CD8-positive, alpha-beta T cell (primary cell): ENCODE measurements at regions of chr18 and their contacts with region 1.

Region 1: GRCh38 chr18:2547477-2548087 is 23.7 kb downstream of the METTL4 start:
- DNase-seq: peak in 2 of 9 experiments; percentile 54 to 66
- ATAC-seq: peak; percentile 52
- H3K4me3 ChIP-seq: no peak overlapping the region
- H3K4me3 Mint-ChIP-seq: no peak overlapping the region
- H3K27ac ChIP-seq: no peak overlapping the region
- H3K27ac Mint-ChIP-seq: no peak overlapping the region
- H3K4me1 ChIP-seq: no peaks in the 10 kb centered on the region
- H3K4me1 Mint-ChIP-seq: peaks cover 11% of the 10 kb centered on the region
- H3K27me3 ChIP-seq: no peaks in the 10 kb centered on the region
- H3K27me3 Mint-ChIP-seq: no peaks in the 10 kb centered on the region
- CTCF ChIP-seq: peak; percentile 79

Region 2: GRCh38 chr18:741931-742512 is 1805.6 kb before region 1 on chr18:
- CTCF ChIA-PET with region 1: no interaction called
- POLR2A ChIA-PET with region 1: no interaction called
- intact Hi-C with region 1: loop called in 1 of 2 experiments (anchors 5 kb)
- DNase-seq: peak in 2 of 9 experiments; percentile 59 to 72
- ATAC-seq: peak; percentile 76
- H3K4me3 ChIP-seq: no peak overlapping the region
- H3K4me3 Mint-ChIP-seq: no peak overlapping the region
- H3K27ac ChIP-seq: no peak overlapping the region
- H3K27ac Mint-ChIP-seq: no peak overlapping the region
- H3K4me1 ChIP-seq: no peaks in the 10 kb centered on the region
- H3K4me1 Mint-ChIP-seq: peaks cover 2% of the 10 kb centered on the region
- H3K27me3 ChIP-seq: no peaks in the 10 kb centered on the region
- H3K27me3 Mint-ChIP-seq: no peaks in the 10 kb centered on the region
- CTCF ChIP-seq: peak; percentile 89

Region 3: GRCh38 chr18:961644-962355 is 1585.8 kb before region 1 on chr18:
- CTCF ChIA-PET with region 1: no interaction called
- POLR2A ChIA-PET with region 1: no interaction called
- intact Hi-C with region 1: loop called in 1 of 2 experiments (anchors 10 kb)
- DNase-seq: peak in 8 of 9 experiments; percentile 9 to 58 (median 46)
- ATAC-seq: no peak
- H3K4me3 ChIP-seq: no peak overlapping the region
- H3K4me3 Mint-ChIP-seq: peak overlapping the region; percentile 58
- H3K27ac ChIP-seq: no peak overlapping the region
- H3K27ac Mint-ChIP-seq: no peak overlapping the region
- H3K4me1 ChIP-seq: no peaks in the 10 kb centered on the region
- H3K4me1 Mint-ChIP-seq: peaks cover 4% of the 10 kb centered on the region
- H3K27me3 ChIP-seq: peaks cover 0 to 4% of the 10 kb centered on the region in 2 experiments
- H3K27me3 Mint-ChIP-seq: peaks cover 9% of the 10 kb centered on the region
- CTCF ChIP-seq: peak; percentile 94

Region 4: GRCh38 chr18:1585879-1586488 is 961.6 kb before region 1 on chr18:
- CTCF ChIA-PET with region 1: no interaction called
- POLR2A ChIA-PET with region 1: no interaction called
- intact Hi-C with region 1: loop called in 1 of 2 experiments (anchors 2 kb)
- DNase-seq: peak in 2 of 9 experiments; percentile 5 to 12
- ATAC-seq: no peak
- H3K4me3 ChIP-seq: no peak overlapping the region
- H3K4me3 Mint-ChIP-seq: no peak overlapping the region
- H3K27ac ChIP-seq: no peak overlapping the region
- H3K27ac Mint-ChIP-seq: no peak overlapping the region
- H3K4me1 ChIP-seq: no peaks in the 10 kb centered on the region
- H3K4me1 Mint-ChIP-seq: peaks cover 4% of the 10 kb centered on the region
- H3K27me3 ChIP-seq: no peaks in the 10 kb centered on the region
- H3K27me3 Mint-ChIP-seq: peaks cover 2% of the 10 kb centered on the region
- CTCF ChIP-seq: peak; percentile 45

Region 5: GRCh38 chr18:2104620-2105462 is 442.7 kb before region 1 on chr18:
- CTCF ChIA-PET with region 1: interaction called, 13 read pairs
- POLR2A ChIA-PET with region 1: no interaction called
- intact Hi-C with region 1: loop called (anchors 2 kb)
- DNase-seq: peak in 8 of 9 experiments; percentile 6 to 55 (median 32)
- ATAC-seq: no peak
- H3K4me3 ChIP-seq: no peak overlapping the region
- H3K4me3 Mint-ChIP-seq: no peak overlapping the region
- H3K27ac ChIP-seq: no peak overlapping the region
- H3K27ac Mint-ChIP-seq: no peak overlapping the region
- H3K4me1 ChIP-seq: no peaks in the 10 kb centered on the region
- H3K4me1 Mint-ChIP-seq: no peaks in the 10 kb centered on the region
- H3K27me3 ChIP-seq: no peaks in the 10 kb centered on the region
- H3K27me3 Mint-ChIP-seq: peaks cover 6% of the 10 kb centered on the region
- CTCF ChIP-seq: peak; percentile 40

Region 6: DNA sequence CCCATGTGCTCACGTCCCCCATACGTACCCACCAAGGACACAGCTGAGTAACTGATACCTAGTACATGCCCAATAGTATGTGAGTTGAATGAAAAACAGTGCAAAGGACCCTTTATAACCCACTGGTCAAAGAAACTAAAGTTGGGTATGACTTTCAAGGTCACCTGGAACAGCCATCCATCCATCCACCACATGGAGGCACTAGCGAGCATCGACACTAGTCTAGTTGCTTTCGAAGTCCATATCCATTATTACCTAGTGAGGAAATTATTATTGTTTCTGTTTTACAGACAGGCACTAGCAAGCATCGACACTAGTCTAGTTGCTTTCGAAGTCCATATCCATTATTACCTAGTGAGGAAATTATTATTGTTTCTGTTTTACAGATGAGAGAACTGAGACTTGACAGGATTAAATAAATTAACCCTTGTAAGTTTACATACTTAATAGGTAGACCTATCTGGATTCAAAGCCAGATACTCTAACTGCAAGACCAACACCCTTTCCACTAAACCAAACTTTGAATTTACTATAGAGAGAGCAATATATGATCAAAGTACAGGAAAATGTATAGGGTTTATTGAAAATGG is 209.9 kb before region 1 on chr18:
- CTCF ChIA-PET with region 1: interaction called, 9 read pairs
- POLR2A ChIA-PET with region 1: no interaction called
- intact Hi-C with region 1: loop called in 1 of 2 experiments (anchors 1 kb)
- DNase-seq: peak in 8 of 9 experiments; percentile 5 to 61 (median 22)
- ATAC-seq: no peak
- H3K4me3 ChIP-seq: no peak overlapping the region
- H3K4me3 Mint-ChIP-seq: no peak overlapping the region
- H3K27ac ChIP-seq: no peak overlapping the region
- H3K27ac Mint-ChIP-seq: no peak overlapping the region
- H3K4me1 ChIP-seq: no peaks in the 10 kb centered on the region
- H3K4me1 Mint-ChIP-seq: no peaks in the 10 kb centered on the region
- H3K27me3 ChIP-seq: no peaks in the 10 kb centered on the region
- H3K27me3 Mint-ChIP-seq: peaks cover 13% of the 10 kb centered on the region
- CTCF ChIP-seq: peak; percentile 55